ENCODE measurements at regions of chr17 and their contacts with region 1.

Region 1: DNA sequence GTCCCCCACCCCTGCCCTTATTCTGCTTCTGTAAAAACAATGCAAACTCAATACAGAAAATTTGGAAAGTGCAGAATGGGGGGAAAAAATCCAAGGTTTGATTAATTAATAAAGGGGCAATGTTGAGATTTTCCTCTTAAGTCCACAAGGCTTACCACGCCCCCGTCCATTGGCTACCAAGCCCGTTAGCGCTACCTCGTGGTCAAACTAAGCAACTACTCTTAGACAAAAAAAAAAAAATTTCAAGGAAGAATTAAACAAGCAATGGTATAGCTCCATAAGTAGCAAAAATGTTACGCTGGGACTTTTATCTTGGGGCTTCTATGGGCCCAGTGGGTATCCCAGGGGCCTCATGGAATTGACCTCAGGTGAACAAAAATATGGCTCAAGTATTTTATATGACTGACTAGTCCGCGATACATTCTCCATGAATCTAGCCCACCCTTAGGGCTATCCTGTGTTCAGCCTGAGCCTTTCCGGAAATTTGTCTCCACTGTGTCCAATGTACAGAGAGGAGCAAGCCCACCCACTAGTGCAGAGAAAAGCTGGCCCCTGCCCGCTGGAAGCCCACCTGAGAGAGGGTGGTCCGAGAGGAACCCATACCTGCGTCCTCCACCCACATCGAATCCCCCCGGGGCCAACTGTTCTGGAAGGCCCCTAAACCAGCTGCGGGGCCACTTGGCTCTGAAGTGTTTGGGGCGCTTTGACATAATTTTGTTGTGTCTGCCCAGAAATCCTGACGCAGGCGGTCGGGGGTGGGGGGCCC is 19.1 kb upstream of the TEX2 start:
- DNase-seq: peak; percentile 76
- ATAC-seq: peak; percentile 51
- H3K4me3 Mint-ChIP-seq: no peak overlapping the region
- H3K27ac Mint-ChIP-seq: no peak overlapping the region
- H3K4me1 Mint-ChIP-seq: no peaks in the 10 kb centered on the region
- H3K27me3 Mint-ChIP-seq: no peaks in the 10 kb centered on the region

Region 2: GRCh38 chr17:63911657-63912426 is 370.3 kb before region 1 on chr17:
- CTCF ChIA-PET with region 1: interaction called, 7 read pairs
- POLR2A ChIA-PET with region 1: no interaction called
- intact Hi-C with region 1: loop called (anchors 2 to 10 kb)
- DNase-seq: peak; percentile 80
- ATAC-seq: peak; percentile 78
- H3K4me3 Mint-ChIP-seq: no peak overlapping the region
- H3K27ac Mint-ChIP-seq: no peak overlapping the region
- H3K4me1 Mint-ChIP-seq: no peaks in the 10 kb centered on the region
- H3K27me3 Mint-ChIP-seq: no peaks in the 10 kb centered on the region

Region 3: GRCh38 chr17:64209983-64210382 is 72.2 kb before region 1 on chr17:
- CTCF ChIA-PET with region 1: no interaction called
- POLR2A ChIA-PET with region 1: no interaction called
- intact Hi-C with region 1: no loop called
- DNase-seq: no peak
- ATAC-seq: no peak
- H3K4me3 Mint-ChIP-seq: no peak overlapping the region
- H3K27ac Mint-ChIP-seq: no peak overlapping the region
- H3K4me1 Mint-ChIP-seq: no peaks in the 10 kb centered on the region
- H3K27me3 Mint-ChIP-seq: no peaks in the 10 kb centered on the region

Region 4: GRCh38 chr17:64240741-64241347 is 41.3 kb before region 1 on chr17:
- CTCF ChIA-PET with region 1: interaction called, 14 read pairs
- POLR2A ChIA-PET with region 1: no interaction called
- intact Hi-C with region 1: loop called in 1 of 2 experiments (anchors 5 kb)
- DNase-seq: no peak
- ATAC-seq: no peak
- H3K4me3 Mint-ChIP-seq: no peak overlapping the region
- H3K27ac Mint-ChIP-seq: no peak overlapping the region
- H3K4me1 Mint-ChIP-seq: peaks cover 45% of the 10 kb centered on the region
- H3K27me3 Mint-ChIP-seq: no peaks in the 10 kb centered on the region